A549 (cell line): ENCODE measurements at regions of chr11 and their contacts with region 1.

Region 1: GRCh38 chr11:1953489-1954266 is 6.5 kb downstream of the MRPL23 start:
- DNase-seq: no peak
- ATAC-seq: peak; percentile 86 to 95
- H3K4me3 ChIP-seq: no peak overlapping the region
- H3K27ac ChIP-seq: no peak overlapping the region
- H3K4me1 ChIP-seq: no peaks in the 10 kb centered on the region
- CTCF ChIP-seq: peak; percentile 22; the same call in 2 of the 3 replicates
- EP300 ChIP-seq: no peak
- POLR2A ChIP-seq: no peak
- RAD21 ChIP-seq: no peak

Region 2: GRCh38 chr11:1970956-1971355 is 17.3 kb after region 1 on chr11:
- CTCF ChIA-PET with region 1: interaction called, 16 read pairs
- POLR2A ChIA-PET with region 1: no interaction called
- DNase-seq: peak in 1 of 2 experiments; percentile 0
- ATAC-seq: no peak
- H3K4me3 ChIP-seq: no peak overlapping the region
- H3K27ac ChIP-seq: no peak overlapping the region
- H3K4me1 ChIP-seq: no peaks in the 10 kb centered on the region
- CTCF ChIP-seq: no peak
- EP300 ChIP-seq: no peak
- POLR2A ChIP-seq: no peak
- RAD21 ChIP-seq: no peak

Region 3: DNA sequence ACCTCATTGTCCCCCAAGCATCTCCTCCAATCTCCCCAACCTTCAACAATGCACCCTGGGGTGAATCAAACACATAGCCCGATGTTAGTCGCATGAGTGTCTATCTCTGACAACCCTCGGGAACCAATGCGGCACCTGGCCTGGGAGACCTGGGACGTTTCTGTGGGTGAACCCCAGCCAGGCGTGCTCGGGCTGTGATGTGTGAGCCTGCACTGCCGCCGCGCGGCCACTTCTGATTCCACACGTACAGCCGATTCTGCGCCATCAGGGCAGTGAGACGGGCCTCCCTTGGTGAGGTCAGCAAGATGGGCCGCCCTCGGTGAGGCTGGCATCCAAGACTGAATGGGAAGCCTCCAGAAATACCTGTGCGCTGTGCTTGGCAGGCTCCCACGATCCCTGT is 49.1 kb after region 1 on chr11:
- CTCF ChIA-PET with region 1: interaction called, 17 read pairs
- POLR2A ChIA-PET with region 1: no interaction called
- DNase-seq: no peak
- ATAC-seq: peak; percentile 49 to 72; a peak in 4 of 6 replicates
- H3K4me3 ChIP-seq: no peak overlapping the region
- H3K27ac ChIP-seq: no peak overlapping the region
- H3K4me1 ChIP-seq: no peaks in the 10 kb centered on the region
- CTCF ChIP-seq: no peak
- EP300 ChIP-seq: no peak
- POLR2A ChIP-seq: no peak
- RAD21 ChIP-seq: no peak